HAP-1 (cell line): ENCODE measurements at regions of chr10 and their contacts with region 1.

Region 1: DNA sequence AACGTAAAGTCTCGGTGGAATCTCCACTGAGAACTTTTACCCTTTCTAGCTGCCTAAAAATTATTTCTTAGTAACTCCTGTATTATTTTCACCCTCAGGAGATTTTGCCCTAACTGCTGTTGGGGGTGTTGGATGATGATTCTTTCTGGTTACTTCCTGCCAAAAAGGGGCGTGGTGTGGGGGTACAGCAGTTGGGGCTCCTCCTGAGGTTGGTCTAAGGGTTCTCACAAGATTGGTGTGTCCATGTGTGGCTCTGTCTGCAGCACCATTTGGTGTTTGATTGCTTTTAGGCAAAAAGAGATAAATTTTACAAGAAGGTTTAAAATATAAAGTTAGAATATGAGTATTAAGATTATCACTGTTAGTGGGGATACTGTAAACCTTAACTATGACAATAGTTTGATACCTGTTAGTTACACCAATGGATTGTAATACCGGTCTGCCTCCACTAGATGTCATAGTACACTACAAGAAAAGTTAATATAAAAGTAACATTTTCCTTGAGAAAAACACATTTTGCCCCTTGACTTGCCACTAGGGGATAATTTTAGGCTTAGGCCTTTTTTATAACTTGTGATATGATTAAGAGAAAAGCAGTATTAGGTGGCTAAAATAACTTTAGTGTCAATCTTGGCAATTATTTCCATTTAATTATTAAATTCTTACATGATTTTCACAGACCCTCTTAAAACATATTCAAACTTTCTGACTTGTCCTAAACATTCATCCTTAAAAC is 928.7 kb downstream of the IPMK start:
- DNase-seq: peak; percentile 62 to 69
- H3K4me3 ChIP-seq: no peak overlapping the region
- H3K4me1 ChIP-seq: no peaks in the 10 kb centered on the region
- H3K27me3 ChIP-seq: no peaks in the 10 kb centered on the region

Region 2: DNA sequence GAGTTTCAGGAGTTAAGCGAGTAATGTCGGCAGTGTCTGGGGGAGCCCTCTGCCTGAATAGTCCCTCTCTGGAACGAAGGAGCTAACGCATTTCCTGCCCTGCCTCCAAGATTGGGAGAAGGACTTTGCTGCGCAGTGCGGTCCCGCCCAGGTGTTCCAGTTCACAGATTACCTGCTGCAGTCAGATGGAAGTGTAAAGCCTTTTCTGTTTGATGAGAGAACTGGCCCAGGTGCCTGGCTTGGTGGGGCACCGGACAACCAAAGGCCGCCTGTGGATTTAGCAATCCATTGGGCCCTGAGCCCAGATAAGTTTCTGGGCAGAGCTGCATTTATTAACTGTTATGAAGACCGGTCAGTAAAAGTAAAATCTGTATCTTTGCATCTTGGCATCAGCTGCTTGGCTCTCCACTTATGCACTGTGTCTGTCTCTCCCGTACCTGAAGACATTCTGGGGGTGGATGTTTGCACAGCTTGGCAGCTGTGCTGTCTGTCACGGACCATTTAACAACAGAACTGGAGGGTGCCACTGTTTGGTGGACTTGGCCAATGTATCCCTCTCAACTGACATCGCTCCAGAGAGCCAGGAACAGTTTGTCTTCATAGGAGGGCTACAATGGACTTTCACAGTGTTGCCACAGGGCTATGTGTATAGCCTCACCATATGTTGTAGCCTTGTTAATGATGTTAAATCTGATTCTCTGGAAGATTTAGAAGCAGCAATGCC is 323.2 kb before region 1 on chr10:
- in situ Hi-C with region 1: no loop called
- DNase-seq: no peak
- H3K4me3 ChIP-seq: no peak overlapping the region
- H3K4me1 ChIP-seq: peaks cover 13% of the 10 kb centered on the region
- H3K27me3 ChIP-seq: no peaks in the 10 kb centered on the region

Region 3: DNA sequence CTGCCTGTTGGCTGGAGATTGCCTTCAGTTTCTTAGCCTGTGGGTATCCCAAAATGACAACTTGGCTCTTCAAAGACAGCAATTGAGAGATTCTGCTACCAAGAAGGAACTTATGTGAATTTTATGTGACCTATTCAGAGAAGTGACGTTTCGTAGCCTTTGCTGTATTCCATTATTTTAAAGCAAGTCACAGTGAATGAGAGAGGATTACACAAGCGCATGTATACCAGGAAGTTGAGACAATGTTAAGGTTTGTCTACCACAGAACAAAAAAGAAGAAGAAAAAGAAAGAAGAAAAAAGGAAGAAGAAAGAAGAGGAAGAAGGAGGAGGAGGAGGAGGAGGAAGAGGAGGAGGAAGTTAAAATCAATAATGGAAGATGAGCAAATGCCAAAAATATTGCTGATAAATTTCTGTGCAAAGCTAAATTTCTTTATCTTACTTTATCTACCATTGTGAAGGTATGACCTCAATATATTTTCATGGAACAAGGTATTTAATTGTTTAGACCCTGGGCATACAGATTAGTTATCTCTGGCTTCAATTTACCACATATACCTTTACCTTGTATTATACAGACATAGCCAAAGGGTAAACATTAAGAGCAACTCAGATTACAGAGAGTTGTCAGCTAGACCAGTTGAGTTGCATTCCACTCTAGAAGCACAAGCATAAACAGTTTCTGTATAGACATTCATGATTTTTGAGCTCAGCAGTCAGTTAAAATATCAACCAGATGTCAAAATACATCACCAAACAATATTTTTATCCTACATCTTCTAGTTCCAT is 120.8 kb before region 1 on chr10:
- in situ Hi-C with region 1: no loop called
- DNase-seq: no peak
- H3K4me3 ChIP-seq: no peak overlapping the region
- H3K4me1 ChIP-seq: peaks cover 8% of the 10 kb centered on the region
- H3K27me3 ChIP-seq: no peaks in the 10 kb centered on the region

Region 4: GRCh38 chr10:57457972-57458512 is 119.1 kb after region 1 on chr10:
- in situ Hi-C with region 1: no loop called
- DNase-seq: no peak
- H3K4me3 ChIP-seq: no peak overlapping the region
- H3K4me1 ChIP-seq: peaks cover 16% of the 10 kb centered on the region
- H3K27me3 ChIP-seq: no peaks in the 10 kb centered on the region

Region 5: GRCh38 chr10:57657164-57657765 is 318.3 kb after region 1 on chr10:
- in situ Hi-C with region 1: loop called (anchors 5 kb)
- DNase-seq: peak; percentile 65 to 81
- H3K4me3 ChIP-seq: no peak overlapping the region
- H3K4me1 ChIP-seq: peaks cover 5% of the 10 kb centered on the region; the same call in 1 of the 2 replicates
- H3K27me3 ChIP-seq: no peaks in the 10 kb centered on the region

Region 6: GRCh38 chr10:57849691-57850357 is 510.8 kb after region 1 on chr10:
- in situ Hi-C with region 1: loop called (anchors 25 kb)
- DNase-seq: peak in 1 of 2 experiments; percentile 66
- H3K4me3 ChIP-seq: no peak overlapping the region
- H3K4me1 ChIP-seq: peaks cover 55% of the 10 kb centered on the region
- H3K27me3 ChIP-seq: no peaks in the 10 kb centered on the region